B cell (primary cell): ENCODE measurements at regions of chr12 and their contacts with region 1.

Region 1: GRCh38 chr12:51320695-51321320 is 3.2 kb downstream of the BIN2 start:
- DNase-seq: no peak
- ATAC-seq: no peak
- H3K4me3 ChIP-seq: peak overlapping the region in 3 of 5 experiments; percentile 15 to 41 (median 26)
- H3K4me3 Mint-ChIP-seq: peak overlapping the region; percentile 64
- H3K27ac ChIP-seq: peak overlapping the region; percentile 4 to 88
- H3K27ac Mint-ChIP-seq: peak overlapping the region; percentile 99
- H3K4me1 ChIP-seq: peaks cover 68 to 80% of the 10 kb centered on the region in 2 donors
- H3K4me1 Mint-ChIP-seq: peaks cover 86% of the 10 kb centered on the region
- H3K27me3 ChIP-seq: no peaks in the 10 kb centered on the region
- H3K27me3 Mint-ChIP-seq: no peaks in the 10 kb centered on the region
- CTCF ChIP-seq: no peak

Region 2: GRCh38 chr12:51270067-51270970 is 50.5 kb before region 1 on chr12 and contains the start of gene SMAGP:
- CTCF ChIA-PET with region 1: interaction called, 18 read pairs
- POLR2A ChIA-PET with region 1: interaction called, 3 read pairs
- intact Hi-C with region 1: loop called (anchors 2 kb)
- DNase-seq: peak; percentile 79
- ATAC-seq: peak; percentile 75
- H3K4me3 ChIP-seq: peak within 1 kb of the TSS; percentile 52 to 86 (median 74)
- H3K4me3 Mint-ChIP-seq: peak within 1 kb of the TSS; percentile 95
- H3K27ac ChIP-seq: peak within 1 kb of the TSS; percentile 12 to 64
- H3K27ac Mint-ChIP-seq: peak within 1 kb of the TSS; percentile 91
- H3K4me1 ChIP-seq: peaks cover 19 to 20% of the 10 kb centered on the region in 2 donors
- H3K4me1 Mint-ChIP-seq: peaks cover 31% of the 10 kb centered on the region
- H3K27me3 ChIP-seq: no peaks in the 10 kb centered on the region
- H3K27me3 Mint-ChIP-seq: no peaks in the 10 kb centered on the region
- CTCF ChIP-seq: no peak
- total RNA-seq, gene SMAGP: 8.0 and 10.4 TPM in 2 replicates

Region 3: GRCh38 chr12:52139552-52140062 is 818.8 kb after region 1 on chr12:
- CTCF ChIA-PET with region 1: no interaction called
- POLR2A ChIA-PET with region 1: no interaction called
- intact Hi-C with region 1: no loop called
- DNase-seq: peak; percentile 43
- ATAC-seq: peak; percentile 77
- H3K4me3 ChIP-seq: no peak overlapping the region
- H3K4me3 Mint-ChIP-seq: no peak overlapping the region
- H3K27ac ChIP-seq: no peak overlapping the region
- H3K27ac Mint-ChIP-seq: no peak overlapping the region
- H3K4me1 ChIP-seq: no peaks in the 10 kb centered on the region
- H3K4me1 Mint-ChIP-seq: peaks cover 1% of the 10 kb centered on the region
- H3K27me3 ChIP-seq: peaks cover 0 to 19% (median 0%) of the 10 kb centered on the region in 4 experiments
- H3K27me3 Mint-ChIP-seq: peaks cover 11% of the 10 kb centered on the region
- CTCF ChIP-seq: peak; percentile 64